AG04450 (cell line): ENCODE measurements at regions of chrX and their contacts with region 1.

Region 1: DNA sequence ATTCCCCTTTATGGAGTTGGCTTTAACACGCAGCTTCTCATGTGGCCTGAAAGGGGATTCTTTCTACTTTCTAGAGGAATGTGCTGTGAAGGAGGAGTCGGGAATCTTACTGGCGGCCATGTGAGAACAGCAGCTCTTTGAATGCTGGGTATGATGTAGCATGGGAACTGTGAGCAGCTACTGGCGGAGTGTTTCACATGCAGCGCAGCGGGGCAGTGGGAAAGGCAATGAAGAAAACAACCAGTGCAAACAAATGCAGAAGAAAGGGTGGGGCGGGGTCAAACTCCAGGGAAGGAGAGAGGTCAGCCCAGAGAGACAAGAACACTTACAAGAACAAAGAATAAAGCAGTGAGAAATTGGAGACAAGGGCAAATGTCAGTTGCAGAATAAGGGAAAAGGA is 363.8 kb upstream of the FTHL17 start:
- DNase-seq: no peak
- H3K4me3 ChIP-seq: no peak overlapping the region
- H3K27ac ChIP-seq: no peak overlapping the region
- H3K27me3 ChIP-seq: no peaks in the 10 kb centered on the region
- CTCF ChIP-seq: no peak

Region 2: GRCh38 chrX:31126205-31126604 is 309.4 kb before region 1 on chrX:
- CTCF ChIA-PET with region 1: no interaction called
- POLR2A ChIA-PET with region 1: no interaction called
- DNase-seq: no peak
- H3K4me3 ChIP-seq: no peak overlapping the region
- H3K27ac ChIP-seq: no peak overlapping the region
- H3K27me3 ChIP-seq: no peaks in the 10 kb centered on the region
- CTCF ChIP-seq: no peak

Region 3: GRCh38 chrX:31619653-31620052 is 184.1 kb after region 1 on chrX:
- CTCF ChIA-PET with region 1: interaction called, 10 read pairs
- POLR2A ChIA-PET with region 1: no interaction called
- DNase-seq: no peak
- H3K4me3 ChIP-seq: no peak overlapping the region
- H3K27ac ChIP-seq: no peak overlapping the region
- H3K27me3 ChIP-seq: no peaks in the 10 kb centered on the region
- CTCF ChIP-seq: no peak